A673 (cell line): ENCODE measurements at regions of chr6 and their contacts with region 1.

Region 1: GRCh38 chr6:74199215-74199915 is 503.4 kb downstream of the CD109 start:
- DNase-seq: no peak
- H3K4me3 ChIP-seq: no peak overlapping the region
- H3K27ac ChIP-seq: no peak overlapping the region
- H3K4me1 ChIP-seq: peaks cover 4% of the 10 kb centered on the region
- H3K27me3 ChIP-seq: no peaks in the 10 kb centered on the region
- CTCF ChIP-seq: no peak

Region 2: GRCh38 chr6:74091136-74091793 is 108.1 kb before region 1 on chr6:
- CTCF ChIA-PET with region 1: no interaction called
- POLR2A ChIA-PET with region 1: no interaction called
- intact Hi-C with region 1: loop called (anchors 5 kb)
- DNase-seq: peak; percentile 75
- H3K4me3 ChIP-seq: no peak overlapping the region
- H3K27ac ChIP-seq: no peak overlapping the region
- H3K4me1 ChIP-seq: no peaks in the 10 kb centered on the region
- H3K27me3 ChIP-seq: no peaks in the 10 kb centered on the region
- CTCF ChIP-seq: peak; percentile 81

Region 3: DNA sequence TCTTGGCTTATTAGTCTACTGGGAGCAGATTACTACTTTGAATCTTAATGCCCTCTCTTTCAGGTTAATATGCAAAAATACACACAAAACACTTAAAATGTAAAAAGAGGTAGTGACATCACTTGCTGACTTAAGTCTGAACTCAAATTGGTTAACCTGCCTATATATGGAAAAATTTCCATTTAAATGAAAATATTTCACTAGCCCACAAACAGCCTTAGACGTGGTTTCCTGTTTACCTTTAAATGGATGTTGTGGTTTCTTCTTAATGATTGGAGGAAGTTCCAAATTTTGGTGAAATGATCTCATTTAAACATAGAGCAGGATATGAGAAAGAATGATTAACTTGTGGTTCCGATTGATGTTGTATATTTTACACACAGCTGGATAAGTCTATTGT is 50.3 kb after region 1 on chr6:
- CTCF ChIA-PET with region 1: no interaction called
- POLR2A ChIA-PET with region 1: no interaction called
- intact Hi-C with region 1: loop called (anchors 5 kb)
- DNase-seq: peak; percentile 73
- H3K4me3 ChIP-seq: no peak overlapping the region
- H3K27ac ChIP-seq: peak overlapping the region; percentile 88
- H3K4me1 ChIP-seq: peaks cover 31% of the 10 kb centered on the region
- H3K27me3 ChIP-seq: no peaks in the 10 kb centered on the region
- CTCF ChIP-seq: no peak

Region 4: GRCh38 chr6:74343804-74344203 is 144.4 kb after region 1 on chr6:
- CTCF ChIA-PET with region 1: no interaction called
- POLR2A ChIA-PET with region 1: no interaction called
- intact Hi-C with region 1: no loop called
- DNase-seq: peak; percentile 5
- H3K4me3 ChIP-seq: no peak overlapping the region
- H3K27ac ChIP-seq: no peak overlapping the region
- H3K4me1 ChIP-seq: no peaks in the 10 kb centered on the region
- H3K27me3 ChIP-seq: no peaks in the 10 kb centered on the region
- CTCF ChIP-seq: peak; percentile 32; the same call in 1 of the 2 replicates

Region 5: DNA sequence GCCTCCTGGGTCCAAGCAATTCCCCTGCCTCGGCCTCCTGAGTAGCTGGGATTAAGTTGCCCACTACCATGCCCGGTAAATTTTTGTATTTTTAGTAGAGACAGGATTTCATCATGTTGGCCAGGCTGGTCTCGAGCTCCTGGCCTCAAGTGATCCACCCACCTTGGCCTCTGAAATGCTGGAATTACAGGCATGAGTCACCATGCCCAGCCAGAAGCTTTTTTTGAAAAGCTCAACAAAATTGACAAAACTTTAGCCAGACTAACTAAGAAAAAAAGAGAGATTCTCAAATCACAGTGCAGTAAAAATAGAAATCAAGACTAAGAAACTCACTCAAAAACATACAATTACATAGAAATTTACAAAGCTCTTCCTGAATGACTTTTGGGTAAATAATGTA is 585.9 kb after region 1 on chr6:
- CTCF ChIA-PET with region 1: no interaction called
- POLR2A ChIA-PET with region 1: interaction called, 14 read pairs
- intact Hi-C with region 1: no loop called
- DNase-seq: no peak
- H3K4me3 ChIP-seq: no peak overlapping the region
- H3K27ac ChIP-seq: no peak overlapping the region
- H3K4me1 ChIP-seq: no peaks in the 10 kb centered on the region
- H3K27me3 ChIP-seq: no peaks in the 10 kb centered on the region
- CTCF ChIP-seq: no peak